Head of caudate nucleus (tissue), 42 donors: ENCODE measurements at regions of chr9 and their contacts with region 1.

Region 1: GRCh38 chr9:116860509-116861120 is 173.5 kb downstream of the TRIM32 start:
- DNase-seq: peak; percentile 43 to 90 (median 73)

Region 2: DNA sequence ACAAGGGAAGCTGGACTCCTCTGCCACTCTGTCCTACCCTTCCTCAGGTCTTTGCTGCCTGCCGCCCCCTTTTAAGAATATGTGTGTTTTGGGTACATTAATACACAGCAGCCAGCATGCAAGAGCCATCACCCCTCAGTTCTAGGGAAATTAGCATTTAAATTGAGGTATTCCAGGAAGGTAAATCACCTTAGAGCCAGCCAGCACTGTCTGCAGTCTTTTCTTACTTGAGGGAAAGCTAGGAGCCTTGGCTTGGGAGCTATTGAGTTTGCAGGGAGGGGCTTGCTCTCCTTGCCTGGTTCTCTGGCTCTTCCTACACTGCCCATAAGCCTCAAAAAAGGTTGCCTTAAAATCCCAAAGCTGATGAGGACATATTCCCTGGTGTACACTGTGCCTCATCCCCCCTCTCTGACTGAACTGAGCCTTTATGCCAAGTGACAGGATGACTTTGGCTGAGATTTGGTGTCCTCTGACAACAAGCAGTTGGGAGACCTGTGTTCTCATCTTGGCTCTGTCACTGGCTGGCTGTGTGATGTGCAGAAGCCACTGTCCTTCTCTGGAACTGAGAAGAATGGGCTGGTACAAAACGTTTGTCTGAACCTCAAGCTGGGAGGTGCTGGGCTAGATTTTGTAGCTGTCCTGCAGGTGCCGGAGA is 119.4 kb before region 1 on chr9:
- intact Hi-C with region 1: loop called (anchors 10 kb)
- DNase-seq: no peak